Left colon (tissue), 2 donors: ENCODE measurements at regions of chr21 and their contacts with region 1.

Region 1: GRCh38 chr21:39125752-39126485 is 57.3 kb downstream of the PSMG1 start:
- DNase-seq: peak; percentile 40 to 58
- ATAC-seq: peak; percentile 98

Region 2: GRCh38 chr21:38733973-38734546 is 391.9 kb before region 1 on chr21:
- intact Hi-C with region 1: loop called (anchors 5 to 10 kb)
- DNase-seq: peak; percentile 79 to 95
- ATAC-seq: peak; percentile 78

Region 3: DNA sequence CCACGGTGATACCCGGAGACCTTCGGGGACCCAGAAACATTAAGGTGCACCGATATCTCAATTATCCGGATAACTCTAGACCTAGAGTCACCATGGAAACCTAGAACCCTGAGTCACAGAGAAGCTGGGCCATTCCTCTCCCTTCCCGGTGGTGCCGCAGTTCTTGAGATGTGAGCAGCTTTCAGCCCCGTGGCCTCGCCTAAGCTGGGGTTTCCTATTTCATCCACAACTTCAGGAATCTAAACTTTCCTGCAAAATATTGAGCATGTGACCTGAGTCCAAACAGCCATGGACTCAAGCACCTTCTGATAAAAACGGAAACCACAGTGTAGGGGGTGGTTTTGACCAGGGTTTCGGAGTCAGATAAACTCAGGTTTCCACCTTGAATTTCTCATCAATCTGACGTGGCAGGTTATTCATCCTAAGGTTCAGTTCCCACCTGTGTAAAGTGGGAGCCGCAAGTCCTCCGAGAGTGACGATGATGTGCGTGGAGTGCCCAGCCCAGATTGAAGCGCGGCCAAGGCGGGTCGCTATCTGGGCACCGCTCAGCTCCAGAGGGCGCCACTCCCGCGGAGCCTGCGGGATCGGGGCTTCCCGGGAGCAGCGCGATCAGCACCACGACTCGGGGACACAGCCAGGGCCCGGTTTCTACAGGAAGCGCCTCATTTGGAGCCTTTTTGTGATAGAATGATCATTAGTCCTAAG is 321.1 kb before region 1 on chr21:
- intact Hi-C with region 1: loop called in 1 of 2 experiments (anchors 5 kb)
- DNase-seq: peak; percentile 79 to 87
- ATAC-seq: peak; percentile 59

Region 4: GRCh38 chr21:39601187-39601928 is 475.4 kb after region 1 on chr21:
- intact Hi-C with region 1: no loop called
- DNase-seq: no peak
- ATAC-seq: no peak